Endothelial cell of umbilical vein (primary cell): ENCODE measurements at regions of chr9 and their contacts with region 1.

Region 1: GRCh38 chr9:120892748-120893610 is 16.0 kb upstream of the PHF19 start:
- DNase-seq: peak; percentile 96
- H3K4me3 ChIP-seq: no peak overlapping the region
- H3K27ac ChIP-seq: peak overlapping the region; percentile 54
- H3K4me1 ChIP-seq: peaks cover 25% of the 10 kb centered on the region
- H3K27me3 ChIP-seq: no peaks in the 10 kb centered on the region
- CTCF ChIP-seq: no peak
- POLR2A ChIP-seq: no peak

Region 2: DNA sequence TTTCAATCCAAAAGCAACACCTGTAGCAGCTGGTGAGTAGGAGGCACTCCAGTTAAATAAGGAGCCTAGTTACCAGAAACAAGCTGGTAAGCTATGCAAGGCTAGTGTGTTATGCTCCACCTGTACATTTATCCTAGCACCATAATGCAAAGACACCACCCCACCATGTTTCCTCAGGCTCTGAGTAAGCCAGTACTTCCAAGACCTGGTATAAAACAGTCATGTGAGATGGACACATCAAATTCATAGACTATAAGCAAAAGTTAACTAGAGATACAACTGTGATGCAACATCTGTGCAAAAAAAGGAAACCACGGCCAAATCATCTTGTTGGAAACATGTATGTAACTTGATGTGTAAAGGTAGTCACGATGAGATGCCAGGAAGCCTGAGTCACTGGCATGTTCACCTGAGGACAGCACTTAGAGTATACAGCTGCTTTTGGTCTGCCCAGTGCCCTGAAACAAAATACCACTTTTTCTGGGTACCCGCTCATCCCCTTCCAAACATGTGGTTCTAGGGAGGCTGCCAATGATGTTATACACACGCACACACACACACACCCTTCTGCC is 379.1 kb before region 1 on chr9:
- CTCF ChIA-PET with region 1: no interaction called
- POLR2A ChIA-PET with region 1: no interaction called
- dilution Hi-C with region 1: no loop called
- intact Hi-C with region 1: no loop called
- DNase-seq: no peak
- H3K4me3 ChIP-seq: no peak overlapping the region
- H3K27ac ChIP-seq: no peak overlapping the region
- H3K4me1 ChIP-seq: no peaks in the 10 kb centered on the region
- H3K27me3 ChIP-seq: no peaks in the 10 kb centered on the region
- CTCF ChIP-seq: no peak
- POLR2A ChIP-seq: no peak

Region 3: GRCh38 chr9:120842690-120843499 is 50.1 kb before region 1 on chr9 and contains the start of gene PSMD5:
- CTCF ChIA-PET with region 1: no interaction called
- POLR2A ChIA-PET with region 1: no interaction called
- dilution Hi-C with region 1: no loop called
- intact Hi-C with region 1: no loop called
- DNase-seq: peak; percentile 99
- H3K4me3 ChIP-seq: peak within 1 kb of the TSS; percentile 53 to 80 (median 76)
- H3K27ac ChIP-seq: peak within 1 kb of the TSS; percentile 72
- H3K4me1 ChIP-seq: peaks cover 25% of the 10 kb centered on the region
- H3K27me3 ChIP-seq: no peaks in the 10 kb centered on the region
- CTCF ChIP-seq: no peak
- POLR2A ChIP-seq: peak; percentile 92
- total RNA-seq, gene PSMD5: 62.2 and 70.2 TPM in 2 replicates

Region 4: GRCh38 chr9:120868676-120869359 is 24.2 kb before region 1 on chr9:
- CTCF ChIA-PET with region 1: interaction called, 5 read pairs
- POLR2A ChIA-PET with region 1: no interaction called
- dilution Hi-C with region 1: no loop called
- intact Hi-C with region 1: loop called (anchors 1 kb)
- DNase-seq: peak; percentile 86
- H3K4me3 ChIP-seq: peak overlapping the region in 2 of 3 experiments; percentile 19 to 58
- H3K27ac ChIP-seq: no peak overlapping the region
- H3K4me1 ChIP-seq: peaks cover 13% of the 10 kb centered on the region
- H3K27me3 ChIP-seq: no peaks in the 10 kb centered on the region
- CTCF ChIP-seq: peak; percentile 27 to 41
- POLR2A ChIP-seq: no peak

Region 5: DNA sequence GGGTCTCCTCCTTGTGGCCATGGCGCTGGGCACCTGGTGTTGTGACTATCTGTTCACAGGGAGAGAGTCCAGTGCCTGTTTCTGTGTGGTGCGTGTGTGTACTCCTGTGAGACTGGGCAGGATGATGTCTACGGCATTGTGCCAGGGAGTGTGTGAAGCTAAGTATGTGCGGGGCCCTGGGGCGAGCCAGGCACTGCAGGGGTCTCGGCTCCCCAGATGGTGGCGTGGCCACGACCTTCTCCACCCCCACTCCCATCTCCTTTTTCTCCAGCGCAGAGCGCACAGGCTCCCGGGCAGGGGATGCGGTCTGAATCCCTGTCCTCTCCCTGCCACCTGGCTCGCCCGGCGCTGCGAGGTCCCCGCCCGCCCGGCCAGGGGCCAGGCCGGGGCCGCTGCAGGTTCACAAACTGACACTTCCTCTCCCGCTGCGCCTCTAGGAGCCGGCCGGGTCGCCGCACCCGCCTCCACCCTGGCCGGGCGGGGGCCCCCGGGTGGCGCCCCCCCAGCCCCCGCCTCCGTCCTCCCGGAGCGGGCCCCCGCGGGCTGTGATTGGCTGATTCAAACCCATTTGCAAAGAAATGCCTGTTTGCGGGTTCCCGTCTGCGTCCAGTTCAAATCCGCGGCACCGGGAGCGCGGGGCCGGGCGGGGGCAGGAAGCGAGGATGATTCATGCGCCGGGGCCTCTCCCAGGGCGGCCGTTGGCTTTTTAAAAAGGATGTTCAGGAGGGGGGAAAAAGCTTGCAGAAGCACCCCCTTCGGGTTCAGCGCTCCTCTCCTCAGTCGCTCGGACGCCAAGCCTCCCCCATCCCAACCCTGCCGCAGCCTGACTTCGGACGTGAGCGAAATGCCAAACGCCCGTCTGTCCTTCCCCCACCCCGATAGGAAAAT is 16.8 kb before region 1 on chr9:
- CTCF ChIA-PET with region 1: interaction called, 9 read pairs
- POLR2A ChIA-PET with region 1: no interaction called
- dilution Hi-C with region 1: no loop called
- intact Hi-C with region 1: loop called (anchors 1 kb)
- DNase-seq: peak; percentile 90
- H3K4me3 ChIP-seq: peak overlapping the region; percentile 66 to 86 (median 70)
- H3K27ac ChIP-seq: peak overlapping the region; percentile 74
- H3K4me1 ChIP-seq: peaks cover 26% of the 10 kb centered on the region
- H3K27me3 ChIP-seq: no peaks in the 10 kb centered on the region
- CTCF ChIP-seq: peak in 1 of 2 donors; percentile 11
- POLR2A ChIP-seq: no peak

Region 6: GRCh38 chr9:120925535-120926396 is 32.8 kb after region 1 on chr9:
- CTCF ChIA-PET with region 1: interaction called, 4 read pairs
- POLR2A ChIA-PET with region 1: no interaction called
- dilution Hi-C with region 1: no loop called
- intact Hi-C with region 1: loop called (anchors 1 kb)
- DNase-seq: peak; percentile 62
- H3K4me3 ChIP-seq: no peak overlapping the region
- H3K27ac ChIP-seq: peak overlapping the region; percentile 52
- H3K4me1 ChIP-seq: peaks cover 23% of the 10 kb centered on the region
- H3K27me3 ChIP-seq: no peaks in the 10 kb centered on the region
- CTCF ChIP-seq: no peak
- POLR2A ChIP-seq: no peak